Endothelial cell of umbilical vein (primary cell): ENCODE measurements at regions of chr5 and their contacts with region 1.

Region 1: DNA sequence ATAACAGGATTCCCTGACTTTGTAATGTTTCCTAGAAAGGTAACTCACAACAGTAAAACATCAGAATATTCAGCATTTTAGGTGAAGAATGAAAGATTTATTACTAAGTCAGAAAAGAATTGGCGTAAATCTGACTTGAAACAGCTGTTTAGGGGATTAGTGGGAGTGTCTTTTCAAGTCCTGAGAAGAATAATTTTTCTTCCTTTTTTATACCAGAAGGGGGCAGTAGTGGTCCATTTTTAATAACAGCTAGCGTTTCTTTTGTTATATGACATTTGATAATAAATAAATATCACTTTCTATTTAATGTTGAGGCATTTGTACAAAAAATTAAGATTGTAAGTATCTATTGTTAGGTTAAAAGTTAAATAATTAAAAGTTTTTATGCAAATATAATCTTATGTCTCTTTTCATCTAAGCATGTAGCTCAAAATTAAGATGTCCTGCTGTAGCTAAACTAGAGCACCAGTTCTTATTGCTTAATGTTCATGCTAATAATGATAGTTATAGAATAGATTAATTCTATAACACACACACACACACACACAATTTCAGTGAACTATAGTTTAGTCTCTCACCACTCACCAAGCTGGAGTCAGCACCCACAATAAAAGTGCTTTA is 258.7 kb upstream of the ARRDC3 start:
- DNase-seq: peak; percentile 51
- H3K4me3 ChIP-seq: no peak overlapping the region
- H3K27ac ChIP-seq: no peak overlapping the region
- H3K4me1 ChIP-seq: no peaks in the 10 kb centered on the region
- H3K27me3 ChIP-seq: no peaks in the 10 kb centered on the region
- CTCF ChIP-seq: peak in 1 of 2 donors; percentile 20
- POLR2A ChIP-seq: no peak

Region 2: DNA sequence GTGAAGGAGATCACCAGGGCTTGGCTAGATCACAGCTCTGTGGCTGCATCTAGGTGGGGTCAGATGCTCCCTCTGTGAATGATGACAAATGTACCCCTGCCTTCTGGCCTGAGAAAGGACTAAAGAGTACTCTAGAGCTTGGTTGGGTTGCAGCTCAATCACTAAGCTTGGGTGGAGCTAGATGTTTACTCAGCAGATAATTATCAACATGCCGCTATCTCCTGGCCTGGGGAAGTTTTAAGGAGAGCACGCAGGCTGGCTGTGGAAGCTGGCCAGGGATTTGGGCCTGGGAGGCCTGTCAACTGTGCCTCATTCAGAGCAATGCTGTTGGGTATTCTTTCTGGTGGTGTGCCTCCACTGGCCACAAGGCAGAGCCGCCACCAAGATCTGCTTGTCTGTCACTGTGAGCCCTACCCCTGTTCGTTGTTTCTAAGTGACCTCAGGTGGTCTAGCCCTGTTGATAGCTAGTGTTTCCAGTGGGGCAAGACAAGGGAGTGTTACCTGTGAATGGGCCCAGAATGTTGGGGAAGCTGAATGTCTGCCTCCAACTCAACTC is 901.5 kb before region 1 on chr5:
- CTCF ChIA-PET with region 1: no interaction called
- POLR2A ChIA-PET with region 1: no interaction called
- dilution Hi-C with region 1: no loop called
- intact Hi-C with region 1: no loop called
- DNase-seq: no peak
- H3K4me3 ChIP-seq: no peak overlapping the region
- H3K27ac ChIP-seq: no peak overlapping the region
- H3K4me1 ChIP-seq: no peaks in the 10 kb centered on the region
- H3K27me3 ChIP-seq: no peaks in the 10 kb centered on the region
- CTCF ChIP-seq: no peak
- POLR2A ChIP-seq: no peak

Region 3: GRCh38 chr5:91499943-91500531 is 141.8 kb before region 1 on chr5:
- CTCF ChIA-PET with region 1: interaction called, 9 read pairs
- POLR2A ChIA-PET with region 1: no interaction called
- dilution Hi-C with region 1: no loop called
- intact Hi-C with region 1: loop called (anchors 5 kb)
- DNase-seq: peak; percentile 54
- H3K4me3 ChIP-seq: no peak overlapping the region
- H3K27ac ChIP-seq: no peak overlapping the region
- H3K4me1 ChIP-seq: no peaks in the 10 kb centered on the region
- H3K27me3 ChIP-seq: peaks cover 0 to 5% of the 10 kb centered on the region in 2 experiments
- CTCF ChIP-seq: peak; percentile 28 to 30
- POLR2A ChIP-seq: no peak

Region 4: DNA sequence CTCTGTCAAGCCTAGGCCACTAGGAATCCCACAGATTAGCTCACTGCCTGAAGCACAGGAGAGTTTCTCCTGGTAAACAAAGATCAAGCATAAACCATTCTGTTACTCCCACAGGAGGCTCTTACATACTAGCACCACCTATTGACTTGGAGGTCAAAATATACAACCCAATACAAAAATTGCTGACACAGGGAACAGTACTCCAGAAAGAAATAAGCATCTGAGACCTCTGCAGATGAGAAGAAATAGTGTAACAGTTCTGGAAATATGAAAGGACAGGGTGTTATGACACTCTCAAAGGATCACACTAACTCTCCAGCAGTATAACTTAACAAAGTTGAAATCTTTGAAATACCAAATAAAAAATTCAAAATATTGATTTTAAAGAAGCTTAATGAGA is 10.8 kb after region 1 on chr5:
- CTCF ChIA-PET with region 1: interaction called, 14 read pairs
- POLR2A ChIA-PET with region 1: no interaction called
- dilution Hi-C with region 1: no loop called
- intact Hi-C with region 1: no loop called
- DNase-seq: no peak
- H3K4me3 ChIP-seq: no peak overlapping the region
- H3K27ac ChIP-seq: no peak overlapping the region
- H3K4me1 ChIP-seq: no peaks in the 10 kb centered on the region
- H3K27me3 ChIP-seq: no peaks in the 10 kb centered on the region
- CTCF ChIP-seq: no peak
- POLR2A ChIP-seq: no peak

Region 5: DNA sequence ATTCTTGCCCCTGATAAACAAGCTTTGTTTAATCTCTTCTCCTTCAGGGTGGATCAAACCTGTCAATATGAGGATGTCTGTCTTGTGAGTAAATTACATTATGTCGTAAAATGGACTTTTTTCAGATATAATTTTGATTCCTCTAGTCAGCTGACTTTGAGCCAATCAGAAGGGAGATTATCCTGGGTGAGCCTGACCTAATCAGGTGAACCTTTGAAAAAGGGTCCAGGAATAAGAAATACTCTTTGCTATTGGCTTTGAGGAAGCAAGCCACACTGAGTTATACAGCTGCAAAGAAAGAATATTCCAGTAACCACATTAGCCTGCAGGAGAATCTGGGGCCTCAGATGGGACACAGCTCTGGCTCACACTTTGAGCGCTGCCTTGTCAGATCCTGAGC is 45.6 kb after region 1 on chr5:
- CTCF ChIA-PET with region 1: interaction called, 3 read pairs
- POLR2A ChIA-PET with region 1: no interaction called
- dilution Hi-C with region 1: no loop called
- intact Hi-C with region 1: loop called (anchors 2 kb)
- DNase-seq: no peak
- H3K4me3 ChIP-seq: no peak overlapping the region
- H3K27ac ChIP-seq: no peak overlapping the region
- H3K4me1 ChIP-seq: no peaks in the 10 kb centered on the region
- H3K27me3 ChIP-seq: no peaks in the 10 kb centered on the region
- CTCF ChIP-seq: no peak
- POLR2A ChIP-seq: no peak